Activated CD8-positive, alpha-beta memory T cell treated with anti-CD3 and anti-CD28 coated beads, Interleukin-2, amount 10 ng/mL, durations not matched to agents 7 days and 5 days (primary cell): ENCODE measurements at regions of chr18 and their contacts with region 1.

Region 1: DNA sequence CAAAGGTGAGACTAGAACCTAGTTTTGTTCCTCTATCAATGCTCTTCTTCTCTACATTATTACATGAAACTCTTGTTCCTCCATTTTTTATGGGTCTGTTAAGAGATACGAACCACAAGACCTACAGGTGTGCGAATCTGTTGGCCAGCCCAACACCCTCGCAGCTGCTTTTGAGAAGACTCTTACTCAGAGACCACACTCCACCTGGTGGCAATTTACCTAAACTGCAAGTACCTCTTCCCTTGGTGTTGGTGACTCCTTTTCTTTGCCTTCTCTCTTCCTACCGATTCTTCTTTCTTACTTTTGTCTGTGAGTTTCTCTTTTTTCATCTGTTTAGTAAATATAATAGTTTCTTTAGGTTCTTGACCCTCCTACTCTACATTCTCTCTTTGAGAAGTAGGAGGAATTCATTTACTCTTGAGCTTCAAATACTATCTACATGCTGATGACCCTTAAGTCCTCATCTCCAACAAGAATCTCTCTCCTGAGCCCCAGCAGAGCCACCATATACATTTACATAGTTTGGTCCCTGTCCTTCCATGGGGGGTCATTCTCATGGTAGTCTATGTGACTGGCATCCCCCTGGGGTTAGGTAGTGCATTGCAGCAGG is 81.8 kb upstream of the GAREM1 start:
- DNase-seq: peak; percentile 54
- ATAC-seq: peak; percentile 76
- H3K4me3 Mint-ChIP-seq: no peak overlapping the region
- H3K27ac Mint-ChIP-seq: no peak overlapping the region
- H3K4me1 Mint-ChIP-seq: no peaks in the 10 kb centered on the region
- H3K27me3 Mint-ChIP-seq: peaks cover 10% of the 10 kb centered on the region

Region 2: DNA sequence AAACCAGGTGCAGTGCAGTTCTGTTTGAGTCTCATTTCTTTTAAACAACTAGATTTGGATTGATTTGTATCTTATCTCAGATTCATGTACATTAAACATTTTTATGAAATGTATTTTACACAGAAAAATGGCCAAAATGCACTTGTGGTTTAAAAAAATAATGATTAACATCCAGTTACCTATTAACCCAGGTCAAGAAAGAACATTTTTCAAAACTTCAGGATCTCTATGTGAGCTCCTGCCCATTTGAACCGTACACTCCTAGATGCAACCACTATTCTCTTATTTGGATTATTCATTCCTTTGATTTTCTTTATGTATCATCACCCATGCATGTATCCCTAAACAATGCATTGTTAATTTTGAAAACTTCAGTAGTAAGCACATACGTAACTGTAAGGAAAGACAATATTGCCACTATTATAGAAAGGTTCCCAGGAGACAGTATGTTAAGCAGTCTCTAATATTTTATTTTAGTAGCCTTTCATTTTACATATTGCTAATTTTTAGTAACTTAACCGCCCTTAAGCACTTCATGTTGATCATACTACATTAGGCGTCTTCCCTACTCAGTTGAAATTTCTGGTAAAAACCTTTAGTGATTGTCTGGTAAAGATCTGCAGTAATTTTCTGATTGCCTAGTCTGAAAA is 438.1 kb before region 1 on chr18:
- CTCF ChIA-PET with region 1: no interaction called
- DNase-seq: no peak
- ATAC-seq: no peak
- H3K4me3 Mint-ChIP-seq: no peak overlapping the region
- H3K27ac Mint-ChIP-seq: no peak overlapping the region
- H3K4me1 Mint-ChIP-seq: peaks cover 25% of the 10 kb centered on the region
- H3K27me3 Mint-ChIP-seq: no peaks in the 10 kb centered on the region

Region 3: DNA sequence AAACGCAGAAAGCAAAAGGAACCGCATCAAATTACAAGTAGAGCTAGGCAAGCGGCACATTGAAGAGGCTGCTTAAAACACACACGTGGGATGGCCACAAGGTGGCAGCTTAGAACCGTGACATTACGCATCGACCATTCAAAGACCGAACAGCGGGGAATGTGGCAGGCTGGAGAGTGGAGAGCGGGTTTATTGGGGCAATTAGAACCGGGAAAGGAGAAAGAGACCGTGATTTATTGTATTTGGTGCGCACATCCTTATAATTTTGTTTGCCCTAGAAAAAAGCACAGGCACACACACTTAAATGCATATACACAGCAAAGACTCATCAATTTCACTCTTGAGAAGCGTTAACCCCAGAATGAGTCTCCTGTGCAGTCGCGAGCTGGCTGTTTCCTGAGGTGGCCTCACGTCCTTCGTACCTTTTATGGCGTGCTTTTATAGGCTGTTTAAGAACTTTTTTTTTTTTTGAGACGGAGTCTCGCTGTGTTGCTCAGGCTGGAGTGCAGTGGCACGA is 394.4 kb before region 1 on chr18:
- CTCF ChIA-PET with region 1: interaction called, 51 read pairs
- DNase-seq: peak; percentile 81
- ATAC-seq: peak; percentile 94
- H3K4me3 Mint-ChIP-seq: peak overlapping the region; percentile 46
- H3K27ac Mint-ChIP-seq: no peak overlapping the region
- H3K4me1 Mint-ChIP-seq: peaks cover 8% of the 10 kb centered on the region
- H3K27me3 Mint-ChIP-seq: peaks cover 24% of the 10 kb centered on the region

Region 4: DNA sequence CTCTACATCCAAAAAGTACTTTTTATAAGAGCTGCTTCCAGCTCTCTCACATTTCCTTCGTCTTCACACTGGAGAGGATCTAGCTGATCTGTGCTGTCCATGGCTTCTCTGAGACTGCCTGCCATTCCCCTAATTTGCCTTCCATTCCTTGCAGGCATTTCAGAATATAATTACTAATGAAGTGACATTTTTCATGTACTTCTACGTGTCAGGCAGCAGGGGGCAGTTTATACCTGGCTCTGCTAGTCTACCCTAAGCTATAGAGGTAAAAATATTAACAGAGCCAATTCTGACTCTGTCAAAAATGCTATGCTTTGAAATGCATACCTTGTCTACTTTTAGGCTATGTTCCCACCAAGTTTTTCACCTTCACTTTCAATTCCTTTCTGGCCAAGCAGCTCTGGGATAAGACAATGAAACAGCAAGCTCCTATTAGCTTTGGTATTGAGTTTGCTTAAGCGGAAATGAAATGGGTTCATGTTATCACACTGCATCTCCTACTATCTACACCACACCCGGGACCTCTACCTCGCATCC is 280.8 kb before region 1 on chr18:
- CTCF ChIA-PET with region 1: interaction called, 15 read pairs
- DNase-seq: no peak
- ATAC-seq: peak; percentile 47
- H3K4me3 Mint-ChIP-seq: no peak overlapping the region
- H3K27ac Mint-ChIP-seq: no peak overlapping the region
- H3K4me1 Mint-ChIP-seq: no peaks in the 10 kb centered on the region
- H3K27me3 Mint-ChIP-seq: peaks cover 13% of the 10 kb centered on the region